Sciatic nerve (tissue), 2 donors: ENCODE measurements at regions of chr2 and their contacts with region 1.

Region 1: DNA sequence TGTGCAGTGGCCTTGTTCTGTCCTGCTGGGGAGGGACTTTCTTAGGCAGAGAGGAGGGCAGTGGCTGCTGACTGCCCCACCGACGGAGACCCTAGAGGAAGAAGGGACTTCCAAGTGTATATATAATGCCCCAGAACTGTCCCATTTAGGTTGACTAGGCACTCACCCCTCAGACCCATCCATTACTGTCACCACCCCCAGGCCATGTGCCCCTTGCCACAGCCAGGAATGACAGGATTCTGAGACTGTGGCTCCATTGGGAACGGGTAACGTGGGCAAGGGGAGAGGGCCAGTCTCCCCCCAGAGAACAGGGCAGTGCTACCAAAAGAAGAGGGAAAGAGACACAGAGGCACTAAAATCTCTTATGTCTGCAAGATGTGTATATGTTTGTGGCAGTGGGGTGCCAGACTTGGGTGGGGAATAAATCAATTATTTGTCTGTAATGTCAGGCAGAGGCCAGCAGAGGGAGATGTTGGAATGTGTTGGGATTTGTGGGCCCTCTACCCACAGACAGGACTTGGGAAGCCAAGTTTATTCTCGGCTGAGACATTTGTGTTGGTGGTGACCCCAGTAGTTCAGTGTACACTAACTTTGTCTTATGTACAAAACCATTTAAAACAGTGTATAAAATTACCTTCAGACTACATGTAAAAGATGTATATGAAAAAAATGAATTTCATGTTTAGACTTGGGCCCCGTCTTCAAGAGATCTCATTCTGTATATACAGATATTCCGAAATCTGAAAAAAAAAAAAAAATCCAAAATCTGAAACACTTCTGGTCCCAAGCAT is 24.0 kb upstream of the TMEM37 start:
- DNase-seq: no peak
- ATAC-seq: peak; percentile 85

Region 2: GRCh38 chr2:119476301-119477021 is 68.8 kb after region 1 on chr2:
- intact Hi-C with region 1: loop called (anchors 5 kb)
- DNase-seq: no peak
- ATAC-seq: peak; percentile 76